Posterior cingulate gyrus (tissue), 11 donors: ENCODE measurements at regions of chr15 and their contacts with region 1.

Region 1: GRCh38 chr15:90265271-90266060 is at the start of gene NGRN:
- DNase-seq: peak; percentile 92 to 99 (median 95)

Region 2: GRCh38 chr15:90233376-90234095 is 31.9 kb before region 1 on chr15 and contains the start of gene CIB1:
- intact Hi-C with region 1: loop called (anchors 5 kb)
- DNase-seq: peak; percentile 92 to 99 (median 96)